HEK293 (cell line): ENCODE measurements at regions of chr11 and their contacts with region 1.

Region 1: GRCh38 chr11:65329944-65330403 is 3.7 kb upstream of the DPF2 start:
- H3K4me3 ChIP-seq: no peak overlapping the region
- H3K27ac ChIP-seq: no peak overlapping the region
- H3K4me1 ChIP-seq: no peaks in the 10 kb centered on the region
- CTCF ChIP-seq: no peak

Region 2: DNA sequence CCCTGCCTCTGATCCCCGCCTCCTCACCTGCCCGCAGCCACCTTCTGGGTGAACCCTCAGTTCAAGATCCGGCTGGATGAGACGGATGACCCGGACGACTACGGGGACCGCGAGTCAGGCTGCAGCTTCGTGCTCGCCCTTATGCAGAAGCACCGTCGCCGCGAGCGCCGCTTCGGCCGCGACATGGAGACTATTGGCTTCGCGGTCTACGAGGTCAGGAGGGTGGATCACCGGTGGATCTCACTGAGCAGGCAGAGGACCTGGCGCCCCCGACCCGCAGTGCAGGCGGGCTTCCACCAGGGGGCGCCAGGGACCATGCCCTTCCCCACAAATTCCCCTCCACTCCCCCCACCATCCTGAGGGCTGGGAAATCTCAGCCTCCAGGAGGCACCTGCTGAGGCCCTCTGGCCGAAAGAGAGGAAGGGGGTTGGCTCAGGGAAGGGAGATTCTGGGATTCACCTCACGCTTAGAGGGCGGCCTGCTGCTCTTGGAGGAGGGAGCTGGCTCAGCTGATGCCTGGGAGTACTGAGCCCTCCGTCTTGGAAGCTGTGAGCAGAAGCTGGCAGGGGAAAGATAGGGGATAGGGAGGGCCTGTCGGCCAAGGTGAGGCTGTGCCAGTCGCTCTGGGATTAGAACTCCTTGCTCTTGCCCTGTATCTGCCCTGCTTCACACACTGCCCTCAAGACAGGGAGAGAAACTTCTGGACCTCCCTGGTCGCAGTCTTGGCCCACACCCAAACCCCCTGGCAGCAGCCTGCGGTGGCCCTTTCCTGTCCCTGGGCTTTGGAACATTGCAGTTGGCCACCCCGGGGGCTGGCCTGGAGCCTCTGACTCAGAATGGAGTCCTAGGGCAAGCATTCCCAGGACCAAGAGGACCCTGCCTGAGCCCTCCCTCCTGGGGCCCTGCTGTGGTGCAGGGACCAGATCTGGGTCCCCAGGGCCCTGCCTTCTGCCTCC is 125.0 kb before region 1 on chr11:
- CTCF ChIA-PET with region 1: interaction called, 11 read pairs
- POLR2A ChIA-PET with region 1: no interaction called
- H3K4me3 ChIP-seq: no peak overlapping the region
- H3K27ac ChIP-seq: no peak overlapping the region
- H3K4me1 ChIP-seq: no peaks in the 10 kb centered on the region
- CTCF ChIP-seq: peak; percentile 81

Region 3: DNA sequence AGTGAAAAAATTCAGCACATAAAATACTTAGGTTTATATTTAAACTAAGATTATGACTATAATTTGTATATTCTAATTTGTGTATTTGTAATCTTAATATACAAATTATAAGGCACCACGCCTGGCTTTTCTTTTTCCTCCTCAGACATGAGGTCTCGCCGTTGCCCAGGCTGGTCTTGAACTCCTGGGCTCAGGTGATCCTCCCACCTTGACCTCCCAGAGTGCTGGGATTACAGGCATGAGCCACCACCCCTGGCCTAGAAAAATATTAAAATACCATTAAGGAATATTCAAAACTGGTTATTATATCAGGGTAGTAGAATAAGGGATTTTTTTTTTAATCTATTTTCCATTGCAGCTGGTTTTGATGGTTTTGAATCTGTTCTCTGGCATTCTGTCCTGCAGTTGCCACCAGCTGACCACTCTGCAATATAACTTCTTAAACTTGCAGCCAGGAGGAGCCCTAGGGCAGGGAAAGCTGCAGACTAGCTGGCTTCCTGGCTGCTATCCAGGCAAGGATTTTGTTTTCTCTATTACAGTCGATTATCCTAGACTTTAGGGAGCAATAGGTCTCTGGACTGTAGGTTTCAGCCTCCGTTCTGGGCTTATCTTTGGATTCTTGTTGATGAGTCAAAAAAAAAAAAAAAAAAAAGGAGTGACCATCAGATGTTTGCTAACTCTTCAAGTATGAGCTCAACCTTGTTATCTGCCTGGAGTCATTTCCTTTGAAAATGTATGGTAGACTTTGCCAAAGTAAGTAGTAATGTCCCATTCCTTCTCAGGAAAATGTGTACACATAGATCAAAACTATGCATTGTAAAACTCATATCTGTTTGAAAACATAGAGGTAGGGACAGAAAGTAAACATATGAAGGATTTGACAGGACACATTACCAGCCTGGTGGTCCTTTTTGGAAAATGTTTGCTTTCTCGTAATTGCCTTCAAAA is 55.0 kb before region 1 on chr11:
- CTCF ChIA-PET with region 1: interaction called, 83 read pairs
- POLR2A ChIA-PET with region 1: interaction called, 10 read pairs
- H3K4me3 ChIP-seq: no peak overlapping the region
- H3K27ac ChIP-seq: no peak overlapping the region
- H3K4me1 ChIP-seq: no peaks in the 10 kb centered on the region
- CTCF ChIP-seq: 0 out of 2 replicates have a peak, but pooled peaks have one; percentile 43

Region 4: DNA sequence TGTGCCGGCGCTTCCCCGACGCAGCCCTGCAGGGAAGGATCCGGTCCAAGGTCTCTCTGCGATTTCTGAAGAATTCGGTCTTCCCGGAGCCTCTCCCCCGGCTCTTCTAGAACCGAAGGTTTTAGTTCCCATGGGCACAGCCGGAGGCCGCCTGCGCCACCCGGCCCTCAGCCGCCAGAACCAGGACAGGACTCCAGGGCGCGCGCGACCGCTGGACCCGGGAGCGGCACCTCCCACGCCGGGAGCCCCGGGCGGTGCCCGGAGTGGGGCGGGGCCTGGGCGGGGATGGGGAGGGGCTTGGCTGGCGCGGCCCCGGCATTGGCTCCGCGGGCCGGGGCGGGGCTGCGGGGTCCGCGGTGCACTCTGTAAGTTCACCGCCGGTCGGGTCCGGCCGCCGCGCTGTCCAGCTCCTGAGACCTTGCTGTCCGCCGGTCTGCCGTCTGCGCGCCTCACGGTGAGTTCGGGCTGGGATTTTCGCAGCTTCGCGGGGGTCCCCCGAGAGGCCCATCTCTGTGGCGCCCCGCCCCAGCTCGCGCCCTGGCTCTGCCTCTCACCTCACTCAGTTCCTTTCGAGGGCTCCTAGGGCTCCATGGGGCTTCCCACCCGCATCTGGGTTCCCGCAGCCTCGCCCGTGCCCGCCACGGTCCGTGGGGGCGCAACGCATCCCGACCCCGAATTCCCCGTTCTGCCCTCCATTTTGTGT is 15.3 kb before region 1 on chr11 and contains the start of gene CDC42EP2:
- CTCF ChIA-PET with region 1: interaction called, 206 read pairs
- POLR2A ChIA-PET with region 1: interaction called, 17 read pairs
- H3K4me3 ChIP-seq: peak within 1 kb of the TSS; percentile 67
- H3K27ac ChIP-seq: peak within 1 kb of the TSS; percentile 60; the same call in 1 of the 2 replicates
- H3K4me1 ChIP-seq: no peaks in the 10 kb centered on the region
- CTCF ChIP-seq: peak; percentile 38

Region 5: GRCh38 chr11:65354265-65355012 is 24.5 kb after region 1 on chr11 and contains the start of gene TIGD3:
- CTCF ChIA-PET with region 1: interaction called, 15 read pairs
- POLR2A ChIA-PET with region 1: interaction called, 8 read pairs
- H3K4me3 ChIP-seq: peak within 1 kb of the TSS; percentile 66
- H3K27ac ChIP-seq: peak within 1 kb of the TSS; percentile 77; the same call in 1 of the 2 replicates
- H3K4me1 ChIP-seq: no peaks in the 10 kb centered on the region
- CTCF ChIP-seq: 0 out of 2 replicates have a peak, but pooled peaks have one; percentile 25